ENCODE measurements at regions of chr5 and their contacts with region 1.

Region 1: DNA sequence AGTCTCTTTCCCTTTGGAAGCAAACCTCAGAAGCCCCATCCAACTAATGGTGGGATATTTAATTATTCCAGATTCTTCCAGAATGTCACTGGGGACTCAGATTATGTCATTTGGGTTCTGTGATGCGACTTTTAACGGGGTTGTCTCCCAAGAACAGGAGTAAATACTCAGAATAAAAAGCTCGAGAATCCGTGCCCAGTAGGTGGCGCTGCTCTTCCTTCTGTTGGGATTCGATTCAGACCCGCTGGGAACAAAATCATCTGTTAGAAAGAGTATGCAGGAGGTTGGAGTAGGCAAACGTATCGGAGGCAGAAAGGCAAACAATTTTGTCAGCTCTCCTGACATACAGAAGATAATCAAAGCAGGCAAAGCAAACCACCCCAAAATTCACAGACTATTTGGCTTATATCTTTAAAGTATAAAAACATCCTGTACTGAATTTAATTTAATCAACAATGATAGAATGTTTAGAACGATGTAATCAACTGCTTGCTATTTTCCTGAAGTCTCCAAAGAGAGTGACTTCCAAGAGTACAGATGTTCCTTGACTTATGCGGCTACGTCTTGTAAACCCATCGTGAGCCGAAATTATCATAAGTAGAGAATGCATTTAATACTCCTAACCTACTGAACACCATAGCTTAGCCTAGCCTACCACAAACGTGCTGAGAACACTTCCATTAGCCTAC is 169.8 kb upstream of the RAI14 start:
- DNase-seq: peak; percentile 65 to 79
- ATAC-seq: peak; percentile 52 to 76 (median 69)
- H3K4me3 ChIP-seq: no peak overlapping the region
- H3K4me3 Mint-ChIP-seq: no peak overlapping the region
- H3K27ac ChIP-seq: no peak overlapping the region
- H3K27ac Mint-ChIP-seq: peak overlapping the region in 1 of 2 donors; percentile 15
- H3K4me1 ChIP-seq: peaks cover 9% of the 10 kb centered on the region
- H3K4me1 Mint-ChIP-seq: peaks cover 32 to 38% of the 10 kb centered on the region in 2 donors
- H3K27me3 ChIP-seq: no peaks in the 10 kb centered on the region
- H3K27me3 Mint-ChIP-seq: peaks cover 0 to 4% of the 10 kb centered on the region in 2 donors
- CTCF ChIP-seq: peak; percentile 90

Region 2: GRCh38 chr5:34522599-34523386 is 36.5 kb after region 1 on chr5:
- intact Hi-C with region 1: loop called (anchors 5 kb)
- DNase-seq: peak; percentile 29 to 76
- ATAC-seq: peak; percentile 59 to 88 (median 86)
- H3K4me3 ChIP-seq: no peak overlapping the region
- H3K4me3 Mint-ChIP-seq: no peak overlapping the region
- H3K27ac ChIP-seq: no peak overlapping the region
- H3K27ac Mint-ChIP-seq: peak overlapping the region in 1 of 2 donors; percentile 70
- H3K4me1 ChIP-seq: no peaks in the 10 kb centered on the region
- H3K4me1 Mint-ChIP-seq: peaks cover 11 to 15% of the 10 kb centered on the region in 2 donors
- H3K27me3 ChIP-seq: no peaks in the 10 kb centered on the region
- H3K27me3 Mint-ChIP-seq: no peaks in the 10 kb centered on the region
- CTCF ChIP-seq: peak; percentile 83

Region 3: DNA sequence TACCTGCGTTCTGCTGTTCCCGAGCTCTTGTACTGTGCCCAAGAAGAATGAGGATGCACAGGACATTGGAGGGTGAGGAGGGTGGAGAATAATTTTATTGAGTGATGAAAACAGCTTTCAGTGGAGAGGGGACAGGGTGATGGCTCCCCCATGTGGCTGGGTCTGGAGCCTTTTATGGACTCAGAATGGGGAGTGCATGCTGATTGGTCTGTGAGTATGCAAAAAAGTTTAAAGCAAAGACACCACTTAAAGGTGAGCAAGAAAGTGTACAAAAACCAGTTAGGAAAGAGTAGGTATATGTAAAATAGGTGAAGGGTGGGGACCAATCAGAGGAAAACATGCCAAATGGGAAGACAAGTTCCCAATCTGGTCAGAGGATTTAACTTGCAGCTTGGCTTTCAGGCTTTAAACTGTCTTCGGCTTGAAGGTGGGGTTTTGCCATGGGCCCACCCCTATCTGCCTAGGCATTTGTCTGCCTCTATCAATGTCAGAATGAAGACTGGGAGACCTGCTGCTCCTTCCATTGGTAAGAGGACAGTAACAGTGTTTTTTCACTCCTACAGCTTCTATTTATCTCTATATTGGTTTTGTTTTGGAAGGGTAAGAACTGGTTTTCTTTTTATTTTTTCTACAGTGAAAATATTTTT is 51.8 kb after region 1 on chr5:
- intact Hi-C with region 1: loop called (anchors 1 kb)
- DNase-seq: peak; percentile 13 to 26
- ATAC-seq: peak; percentile 58 to 79 (median 67)
- H3K4me3 ChIP-seq: no peak overlapping the region
- H3K4me3 Mint-ChIP-seq: no peak overlapping the region
- H3K27ac ChIP-seq: no peak overlapping the region
- H3K27ac Mint-ChIP-seq: no peak overlapping the region
- H3K4me1 ChIP-seq: no peaks in the 10 kb centered on the region
- H3K4me1 Mint-ChIP-seq: no peaks in the 10 kb centered on the region
- H3K27me3 ChIP-seq: peaks cover 3% of the 10 kb centered on the region
- H3K27me3 Mint-ChIP-seq: peaks cover 23 to 30% of the 10 kb centered on the region in 2 donors
- CTCF ChIP-seq: peak; percentile 50

Region 4: DNA sequence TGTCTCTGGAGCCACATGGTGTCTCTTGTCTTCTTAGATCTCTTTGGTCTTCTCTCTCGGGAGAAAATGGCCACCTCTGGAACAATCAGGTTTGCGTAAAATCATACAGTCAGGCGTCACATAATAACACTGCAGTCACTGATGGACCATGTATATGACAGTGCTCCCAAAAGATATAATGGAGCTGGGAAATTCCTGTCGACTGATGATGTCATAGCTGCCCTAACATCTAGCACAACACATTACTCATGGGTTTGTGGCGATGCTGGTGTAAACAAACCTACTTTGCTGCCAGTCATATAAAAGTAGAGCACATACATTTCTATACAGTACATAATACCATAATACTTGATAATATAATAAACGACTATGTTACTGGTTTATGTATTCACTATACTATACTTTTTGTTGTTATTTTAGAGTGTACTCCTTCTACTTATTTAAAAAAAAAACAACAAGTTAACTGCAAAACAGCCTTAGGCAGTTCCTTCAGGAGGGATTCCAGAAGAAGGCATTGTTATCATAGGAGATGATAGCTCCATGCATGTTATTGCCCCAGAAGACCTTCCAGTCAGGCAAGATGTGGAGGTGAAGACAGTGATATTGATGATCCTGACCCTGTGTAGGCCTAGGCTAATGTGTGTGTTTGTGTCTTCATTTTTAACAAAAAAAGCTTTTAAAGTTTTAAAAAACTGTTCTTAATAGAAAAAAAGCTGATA is 139.9 kb after region 1 on chr5:
- intact Hi-C with region 1: no loop called
- DNase-seq: no peak
- ATAC-seq: no peak
- H3K4me3 ChIP-seq: no peak overlapping the region
- H3K4me3 Mint-ChIP-seq: no peak overlapping the region
- H3K27ac ChIP-seq: no peak overlapping the region
- H3K27ac Mint-ChIP-seq: no peak overlapping the region
- H3K4me1 ChIP-seq: no peaks in the 10 kb centered on the region
- H3K4me1 Mint-ChIP-seq: no peaks in the 10 kb centered on the region
- H3K27me3 ChIP-seq: no peaks in the 10 kb centered on the region
- H3K27me3 Mint-ChIP-seq: peaks cover 17 to 19% of the 10 kb centered on the region in 2 donors
- CTCF ChIP-seq: no peak

Region 5: GRCh38 chr5:34898258-34898895 is 412.1 kb after region 1 on chr5:
- intact Hi-C with region 1: loop called (anchors 1 kb)
- DNase-seq: peak; percentile 45 to 80
- ATAC-seq: peak; percentile 70 to 86 (median 80)
- H3K4me3 ChIP-seq: no peak overlapping the region
- H3K4me3 Mint-ChIP-seq: no peak overlapping the region
- H3K27ac ChIP-seq: no peak overlapping the region
- H3K27ac Mint-ChIP-seq: no peak overlapping the region
- H3K4me1 ChIP-seq: no peaks in the 10 kb centered on the region
- H3K4me1 Mint-ChIP-seq: no peaks in the 10 kb centered on the region
- H3K27me3 ChIP-seq: no peaks in the 10 kb centered on the region
- H3K27me3 Mint-ChIP-seq: no peaks in the 10 kb centered on the region
- CTCF ChIP-seq: peak; percentile 80

Measured in natural killer cell (primary cell).